Activated naive CD4-positive, alpha-beta T cell treated with anti-CD3 and anti-CD28 coated beads for 36 hours (primary cell): ENCODE measurements at regions of chr3 and their contacts with region 1.

Region 1: DNA sequence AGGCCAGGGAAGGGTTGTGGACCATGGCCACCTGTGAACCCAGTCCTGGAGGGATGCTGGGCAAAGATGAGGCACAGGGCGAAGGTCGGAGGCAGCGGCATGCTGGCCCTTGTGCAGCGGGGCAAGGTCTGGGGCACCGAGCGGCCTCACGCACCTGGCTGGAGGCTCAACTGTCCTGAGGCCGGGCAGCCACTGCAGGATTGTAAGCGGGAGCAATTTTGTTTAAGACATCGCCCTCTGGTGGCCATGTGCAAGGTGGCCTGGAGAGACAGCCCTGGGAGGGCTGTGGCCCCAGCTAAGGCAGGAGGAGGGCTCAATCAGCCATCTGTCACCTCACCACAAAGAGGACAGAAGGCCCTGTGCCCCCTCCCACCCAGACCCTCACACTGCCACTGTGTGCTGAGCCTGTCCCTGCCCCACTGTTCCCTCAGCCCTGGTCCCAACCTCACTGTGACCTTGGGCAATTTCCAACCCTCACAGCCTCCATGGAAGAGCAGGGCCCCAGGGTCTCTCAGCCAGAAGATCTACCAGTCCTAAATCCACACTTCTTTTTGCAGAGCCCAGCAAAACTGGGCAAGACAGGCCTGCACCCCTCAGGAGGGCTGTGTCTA is 46.2 kb downstream of the TPRA1 start:
- DNase-seq: peak; percentile 80
- H3K4me3 Mint-ChIP-seq: no peak overlapping the region
- H3K27ac Mint-ChIP-seq: no peak overlapping the region
- H3K4me1 Mint-ChIP-seq: peaks cover 7% of the 10 kb centered on the region
- H3K27me3 Mint-ChIP-seq: no peaks in the 10 kb centered on the region

Region 2: GRCh38 chr3:126679318-126679751 is 865.0 kb before region 1 on chr3:
- CTCF ChIA-PET with region 1: interaction called, 18 read pairs
- intact Hi-C with region 1: loop called (anchors 1 kb)
- DNase-seq: peak; percentile 86
- H3K4me3 Mint-ChIP-seq: peak overlapping the region; percentile 5
- H3K27ac Mint-ChIP-seq: no peak overlapping the region
- H3K4me1 Mint-ChIP-seq: peaks cover 3% of the 10 kb centered on the region
- H3K27me3 Mint-ChIP-seq: peaks cover 5% of the 10 kb centered on the region

Region 3: GRCh38 chr3:126752303-126752842 is 791.9 kb before region 1 on chr3:
- CTCF ChIA-PET with region 1: interaction called, 6 read pairs
- intact Hi-C with region 1: loop called (anchors 1 kb)
- DNase-seq: peak; percentile 77
- H3K4me3 Mint-ChIP-seq: no peak overlapping the region
- H3K27ac Mint-ChIP-seq: no peak overlapping the region
- H3K4me1 Mint-ChIP-seq: peaks cover 2% of the 10 kb centered on the region
- H3K27me3 Mint-ChIP-seq: no peaks in the 10 kb centered on the region

Region 4: DNA sequence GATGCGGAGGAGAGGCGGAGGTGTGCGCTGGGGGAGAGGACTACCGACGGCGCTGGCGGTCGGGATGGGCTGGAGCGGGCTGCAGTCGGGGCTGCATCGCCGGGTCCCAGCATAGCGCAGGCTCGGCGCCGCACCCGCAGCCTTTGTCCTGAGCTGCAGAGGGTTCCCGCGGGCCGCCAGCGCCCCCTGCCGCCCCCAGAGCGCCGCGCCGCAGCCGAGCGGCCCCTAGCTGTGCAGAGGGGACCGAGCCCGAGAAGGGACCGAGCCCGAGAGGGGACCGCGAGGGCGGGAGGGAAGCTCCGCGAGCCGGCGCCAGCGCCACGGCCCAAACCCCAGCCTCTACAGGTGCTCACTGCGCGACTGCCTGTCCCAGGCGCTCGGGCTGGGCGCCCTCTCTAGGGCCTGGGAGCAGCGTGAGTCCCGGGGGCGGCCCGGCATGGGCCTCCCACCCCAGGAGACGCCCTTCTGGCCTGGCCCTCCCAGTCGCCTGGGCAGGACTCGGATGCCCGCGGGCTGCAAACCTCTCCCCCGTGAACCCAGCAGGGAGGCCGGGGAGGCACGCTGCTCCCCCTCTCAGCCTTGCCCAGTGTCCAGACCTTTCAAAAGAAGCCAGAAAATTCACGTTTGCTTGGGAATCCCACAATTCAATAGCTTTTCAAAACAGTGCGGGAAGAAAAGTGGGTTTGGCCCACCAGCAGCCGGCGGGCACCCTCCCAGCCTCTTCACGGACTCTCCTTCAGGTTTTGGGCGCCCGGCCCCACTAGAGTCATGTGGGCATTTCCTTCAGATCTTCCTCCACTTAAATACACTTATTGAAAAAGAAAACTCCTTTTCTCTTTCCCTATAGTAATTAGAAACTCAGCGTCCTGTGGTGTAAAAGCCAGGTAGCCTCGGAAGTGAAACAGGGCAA is 88.5 kb before region 1 on chr3:
- CTCF ChIA-PET with region 1: interaction called, 3 read pairs
- intact Hi-C with region 1: loop called (anchors 2 kb)
- DNase-seq: peak; percentile 67
- H3K4me3 Mint-ChIP-seq: no peak overlapping the region
- H3K27ac Mint-ChIP-seq: no peak overlapping the region
- H3K4me1 Mint-ChIP-seq: peaks cover 16% of the 10 kb centered on the region
- H3K27me3 Mint-ChIP-seq: peaks cover 53% of the 10 kb centered on the region

Region 5: DNA sequence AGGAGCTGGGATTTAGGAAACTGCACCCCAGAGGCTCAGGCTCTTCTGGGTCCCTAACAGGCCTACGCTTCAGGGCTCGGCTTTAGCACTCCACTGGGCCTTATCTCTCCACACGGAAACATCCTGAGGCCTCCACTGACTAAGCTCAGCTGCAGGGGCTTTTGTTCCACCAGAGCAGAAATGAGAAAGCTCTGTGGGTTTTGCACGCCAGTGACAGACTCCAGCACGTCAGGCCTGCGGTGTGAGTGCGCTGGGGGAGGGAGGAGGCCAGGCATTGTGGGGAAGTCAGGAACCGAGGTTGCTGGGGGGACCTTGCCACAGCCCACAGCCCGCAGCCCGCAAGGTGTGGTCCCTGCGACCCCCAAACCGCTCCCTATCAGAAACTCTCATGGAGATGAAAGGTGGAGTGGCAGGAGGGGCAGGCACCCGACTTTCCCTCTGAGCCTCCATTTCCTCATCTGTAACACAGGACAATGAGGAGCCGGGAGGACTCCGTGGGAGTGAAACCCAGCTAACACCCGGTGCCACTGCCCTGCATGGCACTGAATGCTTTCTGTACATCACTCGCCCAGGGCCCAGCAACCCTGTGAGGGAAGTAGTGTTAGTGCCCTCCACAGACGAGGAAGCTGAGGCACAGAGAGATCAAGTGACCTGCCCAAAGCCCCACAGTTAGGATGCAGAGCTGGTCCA is 60.2 kb before region 1 on chr3:
- CTCF ChIA-PET with region 1: no interaction called
- intact Hi-C with region 1: loop called (anchors 5 kb)
- DNase-seq: peak; percentile 73
- H3K4me3 Mint-ChIP-seq: no peak overlapping the region
- H3K27ac Mint-ChIP-seq: no peak overlapping the region
- H3K4me1 Mint-ChIP-seq: peaks cover 13% of the 10 kb centered on the region
- H3K27me3 Mint-ChIP-seq: peaks cover 31% of the 10 kb centered on the region